Activated CD4-positive, alpha-beta T cell treated with anti-CD3 and anti-CD28 coated beads for 36 hours (primary cell): ENCODE measurements at regions of chr3 and their contacts with region 1.

Region 1: GRCh38 chr3:5298453-5298852 is 110.9 kb downstream of the EDEM1 start:
- DNase-seq: no peak
- ATAC-seq: peak; percentile 80
- H3K4me3 Mint-ChIP-seq: no peak overlapping the region
- H3K27ac Mint-ChIP-seq: no peak overlapping the region
- H3K4me1 Mint-ChIP-seq: no peaks in the 10 kb centered on the region
- H3K27me3 Mint-ChIP-seq: peaks cover 2% of the 10 kb centered on the region

Region 2: GRCh38 chr3:5226783-5227182 is 71.7 kb before region 1 on chr3:
- CTCF ChIA-PET with region 1: interaction called, 6 read pairs
- POLR2A ChIA-PET with region 1: no interaction called
- intact Hi-C with region 1: loop called (anchors 5 kb)
- DNase-seq: no peak
- ATAC-seq: peak; percentile 40
- H3K4me3 Mint-ChIP-seq: no peak overlapping the region
- H3K27ac Mint-ChIP-seq: no peak overlapping the region
- H3K4me1 Mint-ChIP-seq: no peaks in the 10 kb centered on the region
- H3K27me3 Mint-ChIP-seq: no peaks in the 10 kb centered on the region